CD8-positive, alpha-beta T cell (primary cell): ENCODE measurements at regions of chr3 and their contacts with region 1.

Region 1: DNA sequence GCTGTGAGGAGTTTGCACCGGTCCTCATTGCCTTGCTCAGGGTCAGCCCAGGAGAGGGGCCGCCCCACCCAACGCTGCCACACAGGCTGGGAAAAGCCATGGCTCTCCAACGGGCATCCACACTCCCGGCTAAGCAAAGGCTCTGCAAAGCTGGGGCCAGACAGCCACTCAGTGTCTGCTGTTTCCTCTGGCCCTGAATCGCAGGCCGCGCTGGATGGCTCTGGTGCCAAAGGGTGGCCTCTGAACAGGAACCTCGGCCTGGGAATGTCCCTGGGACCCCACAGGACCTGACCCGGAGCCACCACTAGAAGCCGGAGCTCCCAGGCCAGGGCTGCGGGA is 42.9 kb downstream of the RPN1 start:
- DNase-seq: no peak
- ATAC-seq: no peak
- H3K4me3 ChIP-seq: peak overlapping the region; percentile 57 to 76
- H3K4me3 Mint-ChIP-seq: no peak overlapping the region
- H3K27ac ChIP-seq: no peak overlapping the region
- H3K27ac Mint-ChIP-seq: no peak overlapping the region
- H3K4me1 ChIP-seq: peaks cover 5% of the 10 kb centered on the region
- H3K4me1 Mint-ChIP-seq: peaks cover 4% of the 10 kb centered on the region
- H3K27me3 ChIP-seq: peaks cover 0 to 2% of the 10 kb centered on the region in 2 experiments
- H3K27me3 Mint-ChIP-seq: peaks cover 3% of the 10 kb centered on the region
- CTCF ChIP-seq: no peak

Region 2: DNA sequence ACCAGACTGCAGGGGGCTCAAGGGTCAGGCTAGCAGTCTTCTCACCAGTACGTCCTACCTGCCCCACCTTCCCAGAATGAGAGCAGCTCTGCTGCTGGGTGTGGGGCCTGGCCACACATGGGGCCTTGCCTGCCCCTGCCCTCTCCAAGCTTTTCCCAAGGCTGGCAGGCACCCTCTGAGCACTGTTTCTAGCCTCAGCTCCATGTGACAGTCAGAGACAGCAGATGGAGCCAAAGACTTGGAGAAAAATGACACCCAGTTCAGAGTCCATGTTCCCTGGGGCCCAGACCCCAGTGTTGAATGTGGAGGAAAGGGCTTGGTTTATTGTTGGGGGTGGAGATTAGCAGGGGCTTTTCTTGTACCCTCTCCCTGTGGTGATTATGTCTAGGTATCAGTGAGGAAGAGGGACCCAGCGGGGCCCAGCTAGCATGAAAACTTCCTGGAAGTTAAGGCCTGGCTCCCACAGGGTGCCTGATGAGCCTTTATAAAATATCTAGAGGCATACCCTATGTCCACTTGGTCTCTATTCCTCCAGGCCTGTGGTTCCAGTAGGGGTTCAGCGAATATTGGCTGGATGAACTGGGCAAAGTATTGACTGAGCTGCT is 300.5 kb before region 1 on chr3:
- CTCF ChIA-PET with region 1: no interaction called
- POLR2A ChIA-PET with region 1: no interaction called
- intact Hi-C with region 1: loop called (anchors 5 kb)
- DNase-seq: peak in 3 of 9 experiments; percentile 9 to 48 (median 39)
- ATAC-seq: no peak
- H3K4me3 ChIP-seq: no peak overlapping the region
- H3K4me3 Mint-ChIP-seq: no peak overlapping the region
- H3K27ac ChIP-seq: no peak overlapping the region
- H3K27ac Mint-ChIP-seq: no peak overlapping the region
- H3K4me1 ChIP-seq: peaks cover 6% of the 10 kb centered on the region
- H3K4me1 Mint-ChIP-seq: peaks cover 28% of the 10 kb centered on the region
- H3K27me3 ChIP-seq: no peaks in the 10 kb centered on the region
- H3K27me3 Mint-ChIP-seq: no peaks in the 10 kb centered on the region
- CTCF ChIP-seq: no peak

Region 3: GRCh38 chr3:128426128-128426921 is 181.4 kb before region 1 on chr3:
- CTCF ChIA-PET with region 1: interaction called, 83 read pairs
- POLR2A ChIA-PET with region 1: no interaction called
- intact Hi-C with region 1: loop called in 1 of 2 experiments (anchors 1 kb)
- DNase-seq: peak in 8 of 9 experiments; percentile 21 to 76 (median 56)
- ATAC-seq: peak; percentile 98
- H3K4me3 ChIP-seq: peak overlapping the region in 1 of 2 experiments; percentile 20
- H3K4me3 Mint-ChIP-seq: no peak overlapping the region
- H3K27ac ChIP-seq: no peak overlapping the region
- H3K27ac Mint-ChIP-seq: no peak overlapping the region
- H3K4me1 ChIP-seq: peaks cover 4% of the 10 kb centered on the region
- H3K4me1 Mint-ChIP-seq: no peaks in the 10 kb centered on the region
- H3K27me3 ChIP-seq: peaks cover 0 to 2% of the 10 kb centered on the region in 2 experiments
- H3K27me3 Mint-ChIP-seq: peaks cover 17% of the 10 kb centered on the region
- CTCF ChIP-seq: peak; percentile 96

Region 4: DNA sequence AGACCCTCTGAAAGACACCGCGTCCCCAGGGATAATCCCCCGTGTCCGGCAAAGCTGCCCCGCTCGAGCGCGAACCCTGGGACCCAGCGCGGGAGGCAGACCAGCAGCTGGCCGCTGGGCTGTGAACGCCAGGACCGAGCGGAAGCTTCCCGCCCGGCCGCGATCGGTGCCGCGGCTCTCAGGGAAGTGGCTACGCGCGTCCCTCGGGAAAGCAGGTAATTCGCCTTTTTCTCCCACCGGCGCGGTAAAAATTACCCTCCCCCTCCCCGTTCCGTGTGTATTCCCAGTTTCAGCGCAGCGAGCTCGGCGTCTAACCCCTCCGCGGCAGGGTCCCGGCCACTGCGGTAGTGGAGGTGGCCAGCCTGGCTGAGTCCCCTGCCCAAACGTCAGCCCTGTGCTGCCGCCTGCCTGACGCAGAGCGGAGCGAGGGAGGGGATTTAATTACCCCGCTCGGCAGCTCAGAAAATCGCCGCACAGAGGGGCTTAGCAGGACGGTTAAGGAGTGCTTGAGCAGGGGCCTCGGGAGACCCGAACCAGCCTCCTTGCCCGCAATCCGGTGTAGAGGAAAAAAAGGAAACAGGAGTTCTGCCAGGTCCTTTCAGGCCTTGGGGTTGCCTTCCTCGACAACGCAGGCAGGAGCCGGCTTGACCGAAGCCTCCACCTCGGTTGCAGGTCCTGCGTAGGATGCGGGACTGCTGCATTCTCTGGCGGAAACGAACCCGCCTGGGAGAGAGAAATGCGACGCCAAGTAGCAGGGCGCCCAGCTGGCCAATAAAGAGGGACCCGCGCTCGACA is 117.6 kb before region 1 on chr3:
- CTCF ChIA-PET with region 1: interaction called, 3 read pairs
- POLR2A ChIA-PET with region 1: no interaction called
- intact Hi-C with region 1: loop called in 1 of 2 experiments (anchors 5 kb)
- DNase-seq: peak in 1 of 9 experiments; percentile 39
- ATAC-seq: no peak
- H3K4me3 ChIP-seq: peak overlapping the region; percentile 29 to 50
- H3K4me3 Mint-ChIP-seq: peak overlapping the region; percentile 75
- H3K27ac ChIP-seq: no peak overlapping the region
- H3K27ac Mint-ChIP-seq: no peak overlapping the region
- H3K4me1 ChIP-seq: peaks cover 63% of the 10 kb centered on the region
- H3K4me1 Mint-ChIP-seq: peaks cover 37% of the 10 kb centered on the region
- H3K27me3 ChIP-seq: peaks cover 58 to 74% of the 10 kb centered on the region in 2 experiments
- H3K27me3 Mint-ChIP-seq: peaks cover 59% of the 10 kb centered on the region
- CTCF ChIP-seq: no peak

Region 5: GRCh38 chr3:128497387-128498126 is 110.1 kb before region 1 on chr3:
- CTCF ChIA-PET with region 1: no interaction called
- POLR2A ChIA-PET with region 1: no interaction called
- intact Hi-C with region 1: loop called (anchors 2 to 5 kb)
- DNase-seq: peak; percentile 31 to 83 (median 63)
- ATAC-seq: peak; percentile 64
- H3K4me3 ChIP-seq: peak overlapping the region; percentile 47 to 52
- H3K4me3 Mint-ChIP-seq: peak overlapping the region; percentile 80
- H3K27ac ChIP-seq: no peak overlapping the region
- H3K27ac Mint-ChIP-seq: no peak overlapping the region
- H3K4me1 ChIP-seq: peaks cover 9% of the 10 kb centered on the region
- H3K4me1 Mint-ChIP-seq: peaks cover 9% of the 10 kb centered on the region
- H3K27me3 ChIP-seq: peaks cover 18 to 19% of the 10 kb centered on the region in 2 experiments
- H3K27me3 Mint-ChIP-seq: peaks cover 53% of the 10 kb centered on the region
- CTCF ChIP-seq: peak; percentile 76

Region 6: DNA sequence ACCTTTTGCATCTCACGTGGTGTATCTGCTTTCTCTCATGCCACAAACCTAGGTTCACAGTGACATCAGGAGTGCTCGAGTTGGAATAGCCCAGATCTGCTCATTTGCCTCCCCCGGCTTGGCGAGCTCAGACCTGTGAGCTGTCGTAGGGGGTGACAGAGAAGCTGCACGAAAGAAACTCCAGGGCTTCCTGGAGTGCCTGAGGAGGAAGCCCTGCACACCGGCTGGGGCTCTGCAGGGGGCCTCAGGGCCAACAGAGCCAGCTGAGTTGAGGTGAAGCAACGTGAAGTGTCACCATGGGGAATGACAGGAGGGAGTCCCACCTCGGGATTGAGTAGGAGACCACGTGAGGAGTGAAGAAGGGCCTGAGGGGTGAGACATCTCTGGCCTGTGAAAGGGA is 19.5 kb before region 1 on chr3:
- CTCF ChIA-PET with region 1: interaction called, 11 read pairs
- POLR2A ChIA-PET with region 1: no interaction called
- intact Hi-C with region 1: no loop called
- DNase-seq: no peak
- ATAC-seq: no peak
- H3K4me3 ChIP-seq: no peak overlapping the region
- H3K4me3 Mint-ChIP-seq: no peak overlapping the region
- H3K27ac ChIP-seq: no peak overlapping the region
- H3K27ac Mint-ChIP-seq: no peak overlapping the region
- H3K4me1 ChIP-seq: no peaks in the 10 kb centered on the region
- H3K4me1 Mint-ChIP-seq: peaks cover 4% of the 10 kb centered on the region
- H3K27me3 ChIP-seq: no peaks in the 10 kb centered on the region
- H3K27me3 Mint-ChIP-seq: peaks cover 6% of the 10 kb centered on the region
- CTCF ChIP-seq: no peak

Region 7: GRCh38 chr3:129794311-129795185 is 1186.9 kb after region 1 on chr3:
- CTCF ChIA-PET with region 1: no interaction called
- POLR2A ChIA-PET with region 1: no interaction called
- intact Hi-C with region 1: no loop called
- DNase-seq: peak in 4 of 9 experiments; percentile 5 to 50 (median 12)
- ATAC-seq: no peak
- H3K4me3 ChIP-seq: peak overlapping the region in 1 of 2 experiments; percentile 26
- H3K4me3 Mint-ChIP-seq: peak overlapping the region; percentile 49
- H3K27ac ChIP-seq: no peak overlapping the region
- H3K27ac Mint-ChIP-seq: no peak overlapping the region
- H3K4me1 ChIP-seq: peaks cover 8% of the 10 kb centered on the region
- H3K4me1 Mint-ChIP-seq: peaks cover 25% of the 10 kb centered on the region
- H3K27me3 ChIP-seq: no peaks in the 10 kb centered on the region
- H3K27me3 Mint-ChIP-seq: no peaks in the 10 kb centered on the region
- CTCF ChIP-seq: no peak